K562 (cell line): ENCODE measurements at regions of chr21 and their contacts with region 1.

Region 1: GRCh38 chr21:42440187-42440792 is 36.6 kb downstream of the UBASH3A start:
- DNase-seq: no peak
- ATAC-seq: no peak
- H3K4me3 ChIP-seq: no peak overlapping the region
- H3K27ac ChIP-seq: no peak overlapping the region
- H3K4me1 ChIP-seq: peaks cover 0 to 5% of the 10 kb centered on the region in 2 experiments; a peak in 1 of 5 replicates
- H3K27me3 ChIP-seq: peaks cover 2 to 14% of the 10 kb centered on the region in 2 experiments; a peak in 3 of 5 replicates
- CTCF ChIP-seq: no peak
- EP300 ChIP-seq: no peak
- POLR2A ChIP-seq: no peak
- RAD21 ChIP-seq: no peak

Region 2: GRCh38 chr21:42309753-42310221 is 130.5 kb before region 1 on chr21:
- CTCF ChIA-PET with region 1: no interaction called
- POLR2A ChIA-PET with region 1: no interaction called
- in situ Hi-C with region 1: loop called (anchors 10 kb)
- intact Hi-C with region 1: no loop called
- DNase-seq: peak; percentile 65 to 87 (median 83)
- ATAC-seq: peak; percentile 88
- H3K4me3 ChIP-seq: no peak overlapping the region
- H3K27ac ChIP-seq: no peak overlapping the region
- H3K4me1 ChIP-seq: peaks cover 0 to 13% of the 10 kb centered on the region in 2 experiments; a peak in 2 of 5 replicates
- H3K27me3 ChIP-seq: peaks cover 39 to 93% of the 10 kb centered on the region in 2 experiments; a peak in 4 of 5 replicates
- CTCF ChIP-seq: peak; percentile 84 to 91 (median 89)
- EP300 ChIP-seq: no peak
- POLR2A ChIP-seq: no peak
- RAD21 ChIP-seq: peak; percentile 64 to 74

Region 3: DNA sequence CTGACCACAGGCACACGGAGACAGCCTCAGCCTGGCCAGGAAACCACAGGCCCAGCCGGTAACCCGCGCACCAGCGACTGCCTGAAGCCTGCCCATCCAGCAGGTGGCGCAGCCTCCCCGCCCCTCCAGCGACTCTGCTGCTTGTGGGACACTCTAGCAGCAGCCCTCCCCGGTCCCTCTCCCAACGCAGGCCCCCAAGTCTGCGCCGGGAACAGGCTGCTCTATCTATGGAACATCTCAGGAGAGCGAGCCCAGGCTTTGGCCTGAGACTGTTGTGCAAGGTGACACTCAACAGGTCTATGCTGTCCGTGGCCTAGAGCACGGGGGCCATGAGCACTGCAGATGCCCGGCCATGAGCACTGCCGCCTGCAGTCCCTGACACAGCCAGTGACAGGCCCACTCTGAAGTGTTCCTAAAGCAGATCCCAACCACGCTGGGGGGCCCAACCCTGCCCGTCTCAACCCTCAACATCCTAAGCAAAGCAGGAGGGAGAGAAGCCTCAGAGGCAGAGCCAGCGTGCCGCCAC is 410.6 kb after region 1 on chr21:
- CTCF ChIA-PET with region 1: no interaction called
- POLR2A ChIA-PET with region 1: no interaction called
- in situ Hi-C with region 1: no loop called
- intact Hi-C with region 1: no loop called
- DNase-seq: peak; percentile 62 to 75 (median 69)
- ATAC-seq: peak; percentile 97
- H3K4me3 ChIP-seq: no peak overlapping the region
- H3K27ac ChIP-seq: no peak overlapping the region
- H3K4me1 ChIP-seq: peaks cover 0 to 25% of the 10 kb centered on the region in 2 experiments; a peak in 1 of 5 replicates
- H3K27me3 ChIP-seq: no peaks in the 10 kb centered on the region
- CTCF ChIP-seq: peak; percentile 68 to 72 (median 70)
- EP300 ChIP-seq: no peak
- POLR2A ChIP-seq: 0 out of 2 replicates have a peak, but pooled peaks have one; percentile 16
- RAD21 ChIP-seq: peak in 1 of 2 experiments; percentile 50; a peak in 1 of 4 replicates